Posterior cingulate gyrus (tissue), 11 donors: ENCODE measurements at regions of chr12 and their contacts with region 1.

Region 1: DNA sequence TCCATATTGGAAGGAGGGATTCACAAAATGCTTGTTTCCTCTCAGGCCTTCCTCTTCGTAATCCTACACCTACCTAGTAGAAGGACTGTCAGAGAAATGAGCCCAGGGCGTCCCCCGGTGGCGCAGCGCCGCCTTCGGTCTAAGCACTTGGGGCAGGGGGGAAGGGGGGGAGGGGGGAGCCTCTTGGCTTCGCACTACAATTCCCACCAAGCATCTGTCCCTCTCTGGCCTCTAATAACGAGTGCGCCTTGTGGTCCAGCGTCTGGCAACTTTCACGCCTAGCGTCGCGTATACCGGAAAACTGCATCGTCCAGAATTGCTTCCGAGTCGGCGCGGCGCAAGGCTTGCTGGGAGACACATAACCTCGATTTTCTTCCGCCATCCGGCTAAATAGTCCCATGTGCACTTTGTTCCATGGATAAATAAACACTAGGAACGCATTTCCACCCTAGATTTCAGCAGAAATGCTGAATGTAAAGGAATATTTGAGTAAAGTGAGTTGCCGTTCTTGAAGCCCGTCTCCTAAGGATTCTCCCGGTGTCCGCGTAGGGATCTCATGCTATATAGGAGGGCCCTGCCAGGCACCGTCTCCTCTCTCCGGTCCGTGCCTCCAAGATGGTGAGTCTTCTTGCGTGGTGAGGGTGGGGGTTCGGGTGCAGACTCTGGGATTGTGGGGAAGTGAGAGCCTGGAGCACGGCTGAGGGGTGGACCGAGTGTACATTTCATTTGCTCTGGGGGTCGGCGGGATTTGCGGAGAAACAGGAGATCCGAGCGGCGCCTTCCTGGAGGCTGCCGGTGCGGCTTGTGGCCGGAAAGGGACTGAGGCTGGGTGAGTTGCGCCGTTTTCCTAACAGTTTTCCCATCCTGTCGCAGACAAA is at the start of gene RPS26:
- DNase-seq: peak; percentile 80 to 98 (median 90)

Region 2: DNA sequence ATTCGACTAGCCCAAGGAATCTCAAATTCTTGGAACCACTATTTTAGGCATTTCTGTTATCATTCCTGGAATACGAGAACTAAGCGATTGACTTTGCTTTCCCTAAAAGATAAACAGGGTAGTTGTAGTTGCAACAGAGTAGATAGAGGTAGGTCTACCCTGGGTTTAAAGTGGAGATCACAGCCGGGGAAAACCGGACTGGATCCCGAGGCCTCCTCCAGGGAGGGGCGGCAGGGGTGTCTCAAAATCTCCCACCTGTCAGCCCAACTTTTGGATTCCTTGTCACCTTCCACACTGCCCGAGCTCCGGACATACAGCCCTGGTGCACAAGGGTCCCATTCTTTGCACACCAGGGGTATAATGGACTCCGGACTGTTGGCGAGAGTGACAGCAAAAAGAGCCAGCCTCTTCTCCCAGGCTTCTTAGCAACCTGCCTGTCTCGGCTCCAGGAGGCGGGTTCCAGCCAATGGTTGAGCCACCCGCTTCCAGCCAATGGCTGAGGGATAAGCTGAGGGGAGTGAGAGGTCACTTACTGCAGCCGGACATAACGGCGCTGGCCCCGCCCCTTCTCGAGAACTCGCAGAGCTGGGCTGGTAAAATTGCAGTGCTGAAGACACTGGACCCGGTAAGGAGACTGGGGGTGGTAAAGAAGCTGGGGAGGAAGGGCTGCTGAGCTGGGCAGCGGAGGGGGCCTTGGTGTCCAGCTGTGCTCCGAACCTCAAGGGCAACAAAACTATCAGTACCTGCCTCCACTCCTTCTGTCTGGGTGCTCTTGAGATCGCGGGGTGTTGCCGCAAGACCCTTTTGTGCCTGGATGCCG is 44.9 kb before region 1 on chr12 and contains the start of gene SUOX:
- intact Hi-C with region 1: loop called (anchors 1 kb)
- DNase-seq: peak; percentile 94 to 100 (median 98)

Region 3: GRCh38 chr12:56062996-56063395 is 21.2 kb after region 1 on chr12:
- intact Hi-C with region 1: no loop called
- DNase-seq: no peak

Region 4: DNA sequence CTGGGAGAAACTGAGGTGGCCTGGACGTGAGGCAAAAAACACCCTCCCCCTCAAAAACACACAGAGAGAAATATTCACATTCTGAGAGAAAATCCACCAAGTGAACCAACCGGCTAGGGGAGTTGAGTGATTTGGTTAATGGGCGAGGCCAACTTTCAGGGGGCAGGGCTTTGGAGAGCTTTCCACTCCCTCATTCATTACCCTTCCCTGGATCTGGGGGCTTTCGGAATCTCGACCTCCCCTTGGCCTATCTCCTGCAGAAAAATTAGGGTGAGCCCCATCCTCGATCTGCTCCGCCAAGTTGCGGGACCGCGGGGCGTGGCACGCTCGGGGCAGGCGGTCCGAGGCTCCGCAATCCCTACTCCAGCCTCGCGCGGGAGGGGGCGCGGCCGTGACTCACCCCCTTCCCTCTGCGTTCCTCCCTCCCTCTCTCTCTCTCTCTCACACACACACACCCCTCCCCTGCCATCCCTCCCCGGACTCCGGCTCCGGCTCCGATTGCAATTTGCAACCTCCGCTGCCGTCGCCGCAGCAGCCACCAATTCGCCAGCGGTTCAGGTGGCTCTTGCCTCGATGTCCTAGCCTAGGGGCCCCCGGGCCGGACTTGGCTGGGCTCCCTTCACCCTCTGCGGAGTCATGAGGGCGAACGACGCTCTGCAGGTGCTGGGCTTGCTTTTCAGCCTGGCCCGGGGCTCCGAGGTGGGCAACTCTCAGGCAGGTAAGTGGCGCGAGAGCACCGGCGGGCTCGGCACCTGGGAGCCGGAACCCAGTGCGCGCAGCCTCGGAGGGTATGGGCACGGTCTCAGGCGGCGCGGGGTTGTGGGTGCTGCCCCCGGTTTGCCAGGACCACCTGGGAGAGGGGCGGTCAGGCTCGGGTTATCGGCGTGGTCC is 38.1 kb after region 1 on chr12 and contains the start of gene ERBB3:
- intact Hi-C with region 1: loop called (anchors 5 kb)
- DNase-seq: peak; percentile 53 to 96 (median 76)

Region 5: DNA sequence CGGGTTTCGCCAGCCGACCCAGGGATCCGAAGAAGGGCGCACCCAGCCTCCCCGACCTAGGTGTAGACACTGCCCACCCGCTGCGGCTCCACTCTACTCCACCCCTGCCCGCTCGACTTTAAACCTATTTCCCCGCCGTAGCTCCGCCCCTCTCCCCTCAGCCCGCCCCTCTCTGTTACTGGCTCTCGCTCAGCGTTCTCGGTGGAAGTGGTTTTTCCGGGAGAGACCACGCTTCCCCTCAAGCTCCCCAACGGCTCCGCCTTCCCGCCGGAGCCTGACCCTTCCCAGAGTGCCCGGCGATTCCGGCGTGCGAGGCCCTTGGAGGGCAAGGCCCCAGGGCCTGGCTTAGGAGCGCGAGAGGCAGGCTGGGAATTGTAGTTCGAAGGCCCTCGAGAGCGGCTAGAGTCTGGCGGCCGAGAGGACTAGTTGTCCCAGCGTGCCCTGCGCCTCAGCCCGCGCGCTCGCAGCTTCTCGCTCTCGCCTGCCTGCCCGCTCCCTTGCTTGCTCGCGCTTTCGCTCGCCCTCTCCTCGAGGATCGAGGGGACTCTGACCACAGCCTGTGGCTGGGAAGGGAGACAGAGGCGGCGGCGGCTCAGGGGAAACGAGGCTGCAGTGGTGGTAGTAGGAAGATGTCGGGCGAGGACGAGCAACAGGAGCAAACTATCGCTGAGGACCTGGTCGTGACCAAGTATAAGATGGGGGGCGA is 62.5 kb after region 1 on chr12 and contains the start of gene PA2G4:
- intact Hi-C with region 1: loop called (anchors 5 kb)
- DNase-seq: peak; percentile 93 to 100 (median 98)

Region 6: GRCh38 chr12:56338308-56339157 is 296.7 kb after region 1 on chr12 and contains the start of gene IL23A:
- intact Hi-C with region 1: no loop called
- DNase-seq: no peak